HEK293 (cell line): ENCODE measurements at regions of chr17 and their contacts with region 1.

Region 1: GRCh38 chr17:49315551-49316257 is 46.3 kb downstream of the ZNF652 start:
- H3K4me3 ChIP-seq: no peak overlapping the region
- H3K27ac ChIP-seq: no peak overlapping the region
- H3K4me1 ChIP-seq: peaks cover 4% of the 10 kb centered on the region; the same call in 1 of the 2 replicates
- CTCF ChIP-seq: peak; percentile 84

Region 2: GRCh38 chr17:49327835-49328784 is 12.4 kb after region 1 on chr17:
- CTCF ChIA-PET with region 1: interaction called, 23 read pairs
- POLR2A ChIA-PET with region 1: interaction called, 3 read pairs
- H3K4me3 ChIP-seq: no peak overlapping the region
- H3K27ac ChIP-seq: no peak overlapping the region
- H3K4me1 ChIP-seq: peaks cover 5% of the 10 kb centered on the region
- CTCF ChIP-seq: no peak

Region 3: GRCh38 chr17:49361902-49362722 is 46.4 kb after region 1 on chr17 and contains the start of gene ZNF652:
- CTCF ChIA-PET with region 1: interaction called, 91 read pairs
- POLR2A ChIA-PET with region 1: no interaction called
- H3K4me3 ChIP-seq: peak within 1 kb of the TSS; percentile 94
- H3K27ac ChIP-seq: peak within 1 kb of the TSS; percentile 98
- H3K4me1 ChIP-seq: peaks cover 32% of the 10 kb centered on the region
- CTCF ChIP-seq: no peak

Region 4: DNA sequence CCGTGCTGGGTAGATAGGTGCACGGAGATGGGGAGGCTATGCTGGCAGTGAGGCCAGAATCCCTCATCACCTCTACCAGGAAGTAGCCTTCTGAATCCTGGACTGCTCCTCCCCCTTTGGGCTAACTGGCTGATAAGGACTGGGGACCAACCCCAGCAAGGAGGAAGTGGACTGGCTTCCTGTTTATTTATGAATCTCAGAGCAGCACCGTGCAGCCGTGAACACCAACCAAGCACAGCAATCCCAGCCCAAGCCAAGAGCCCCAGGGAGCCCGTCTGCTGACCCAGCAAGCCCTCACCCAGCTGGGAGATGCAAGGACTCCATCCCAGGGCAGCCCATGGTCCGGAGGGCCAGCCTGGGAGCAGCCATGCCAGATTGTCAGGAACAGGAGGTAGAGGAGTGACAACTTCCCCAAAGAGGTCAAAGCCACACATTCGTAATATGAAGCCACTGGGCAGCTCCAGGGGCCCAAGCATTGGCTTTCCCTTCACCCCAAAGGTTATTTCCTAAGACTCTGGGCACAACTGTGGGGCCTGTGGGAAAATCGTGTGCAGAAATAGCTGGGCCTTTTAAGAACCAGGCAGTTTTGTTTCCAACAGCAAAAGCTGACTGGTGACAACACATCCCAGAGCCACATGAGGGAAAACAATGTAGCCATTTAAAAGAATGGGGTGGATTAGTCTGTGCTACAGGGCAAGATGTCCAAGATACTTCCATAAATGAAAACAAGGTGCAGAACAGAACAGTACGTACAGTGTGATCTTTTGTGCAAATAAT is 75.0 kb after region 1 on chr17:
- CTCF ChIA-PET with region 1: interaction called, 122 read pairs
- POLR2A ChIA-PET with region 1: interaction called, 3 read pairs
- H3K4me3 ChIP-seq: no peak overlapping the region
- H3K27ac ChIP-seq: peak overlapping the region; percentile 24
- H3K4me1 ChIP-seq: peaks cover 13% of the 10 kb centered on the region
- CTCF ChIP-seq: no peak

Region 5: DNA sequence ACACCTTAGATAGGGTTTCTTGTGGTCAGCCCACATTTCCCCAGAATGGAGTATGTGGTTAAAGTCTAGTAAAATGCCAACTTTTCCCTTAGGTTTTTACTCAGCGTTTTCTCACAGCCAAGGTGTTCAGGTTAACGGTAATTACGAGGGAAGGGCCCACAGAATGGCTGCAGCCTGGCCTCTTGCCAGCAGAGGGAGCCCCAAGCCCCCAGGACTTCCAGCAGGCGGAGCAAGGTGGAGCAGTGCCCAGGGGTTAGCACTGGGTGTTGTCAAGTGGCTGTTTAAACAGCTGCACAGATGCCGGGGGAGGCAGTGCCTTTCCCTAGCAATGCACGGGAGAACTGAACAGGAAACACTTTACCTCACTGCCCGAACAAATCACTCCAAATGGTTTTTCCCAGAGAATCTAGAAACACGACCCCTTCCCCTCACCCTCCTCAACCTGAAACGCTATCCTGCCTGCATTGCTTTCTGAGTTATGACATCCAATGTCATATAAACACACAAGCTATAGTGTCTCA is 92.3 kb after region 1 on chr17:
- CTCF ChIA-PET with region 1: interaction called, 12 read pairs
- POLR2A ChIA-PET with region 1: no interaction called
- H3K4me3 ChIP-seq: no peak overlapping the region
- H3K27ac ChIP-seq: no peak overlapping the region
- H3K4me1 ChIP-seq: no peaks in the 10 kb centered on the region; the same call in 1 of the 2 replicates
- CTCF ChIP-seq: peak; percentile 99